CD4-positive, alpha-beta memory T cell (primary cell): ENCODE measurements at regions of chr1 and their contacts with region 1.

Region 1: GRCh38 chr1:44730741-44731512 is at the start of gene RNU5D-1:
- DNase-seq: peak; percentile 90 to 94 (median 91)
- H3K4me3 ChIP-seq: peak within 1 kb of the TSS; percentile 31 to 39
- H3K4me3 Mint-ChIP-seq: peak within 1 kb of the TSS; percentile 54 to 93 (median 84)
- H3K27ac ChIP-seq: peak within 1 kb of the TSS; percentile 96
- H3K27ac Mint-ChIP-seq: peak within 1 kb of the TSS; percentile 97 to 100 (median 99)
- H3K4me1 ChIP-seq: peaks cover 22% of the 10 kb centered on the region
- H3K4me1 Mint-ChIP-seq: peaks cover 18 to 38% (median 24%) of the 10 kb centered on the region in 4 donors
- H3K27me3 ChIP-seq: no peaks in the 10 kb centered on the region
- H3K27me3 Mint-ChIP-seq: no peaks in the 10 kb centered on the region
- total RNA-seq, gene RNU5D-1: not detected

Region 2: GRCh38 chr1:44631647-44632539 is 99.0 kb before region 1 on chr1:
- CTCF ChIA-PET with region 1: no interaction called
- POLR2A ChIA-PET with region 1: interaction called, 12 read pairs
- intact Hi-C with region 1: no loop called
- DNase-seq: peak; percentile 86 to 92 (median 88)
- H3K4me3 ChIP-seq: peak overlapping the region; percentile 38 to 65
- H3K4me3 Mint-ChIP-seq: peak overlapping the region; percentile 91 to 97 (median 93)
- H3K27ac ChIP-seq: peak overlapping the region; percentile 85
- H3K27ac Mint-ChIP-seq: peak overlapping the region; percentile 96 to 99 (median 97)
- H3K4me1 ChIP-seq: peaks cover 35% of the 10 kb centered on the region
- H3K4me1 Mint-ChIP-seq: peaks cover 27 to 50% (median 33%) of the 10 kb centered on the region in 4 donors
- H3K27me3 ChIP-seq: no peaks in the 10 kb centered on the region
- H3K27me3 Mint-ChIP-seq: no peaks in the 10 kb centered on the region

Region 3: DNA sequence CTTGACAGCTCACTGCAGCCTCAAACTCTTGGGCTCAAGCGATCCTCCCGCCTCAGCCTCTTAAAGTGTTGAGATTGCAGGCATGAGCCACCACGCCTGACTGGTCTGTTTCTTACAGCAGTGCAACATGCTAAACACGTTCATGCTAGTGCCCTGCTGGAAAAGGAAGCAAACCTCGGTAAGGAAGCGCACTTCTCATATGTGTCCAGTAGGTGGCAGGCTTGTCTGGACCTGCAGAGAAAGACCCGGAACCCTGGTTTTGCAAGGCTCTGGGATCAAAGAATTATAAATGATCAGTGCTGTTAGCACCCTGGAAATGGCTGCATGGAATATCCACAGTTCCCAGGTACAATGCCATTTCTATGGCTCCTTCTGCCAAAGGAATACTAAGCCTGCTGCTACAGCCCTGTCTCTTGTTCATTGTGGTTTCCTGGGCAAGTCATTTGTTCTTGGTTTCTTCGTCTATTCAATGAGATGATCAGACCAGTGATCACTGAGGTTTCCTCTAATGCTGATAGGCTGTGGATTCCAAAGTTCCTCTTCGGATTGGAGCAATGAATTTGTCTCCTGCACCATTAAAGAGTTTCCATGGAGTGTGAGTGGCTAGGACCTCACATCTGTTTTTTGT is 15.9 kb before region 1 on chr1:
- CTCF ChIA-PET with region 1: interaction called, 175 read pairs
- POLR2A ChIA-PET with region 1: interaction called, 182 read pairs
- intact Hi-C with region 1: loop called (anchors 1 kb)
- DNase-seq: peak; percentile 70 to 75 (median 74)
- H3K4me3 ChIP-seq: no peak overlapping the region
- H3K4me3 Mint-ChIP-seq: peak overlapping the region in 7 of 8 donors; percentile 1 to 84 (median 62)
- H3K27ac ChIP-seq: no peak overlapping the region
- H3K27ac Mint-ChIP-seq: peak overlapping the region; percentile 8 to 88 (median 77)
- H3K4me1 ChIP-seq: peaks cover 26% of the 10 kb centered on the region
- H3K4me1 Mint-ChIP-seq: peaks cover 28 to 47% (median 39%) of the 10 kb centered on the region in 4 donors
- H3K27me3 ChIP-seq: no peaks in the 10 kb centered on the region
- H3K27me3 Mint-ChIP-seq: no peaks in the 10 kb centered on the region

Region 4: GRCh38 chr1:44775078-44775929 is 44.4 kb after region 1 on chr1 and contains the start of gene RPS8:
- CTCF ChIA-PET with region 1: interaction called, 53 read pairs
- POLR2A ChIA-PET with region 1: interaction called, 122 read pairs
- intact Hi-C with region 1: loop called (anchors 1 kb)
- DNase-seq: peak; percentile 89 to 92 (median 91)
- H3K4me3 ChIP-seq: peak within 1 kb of the TSS; percentile 87 to 88
- H3K4me3 Mint-ChIP-seq: peak within 1 kb of the TSS; percentile 89 to 98 (median 94)
- H3K27ac ChIP-seq: peak within 1 kb of the TSS; percentile 78
- H3K27ac Mint-ChIP-seq: peak within 1 kb of the TSS; percentile 82 to 99 (median 98)
- H3K4me1 ChIP-seq: peaks cover 25% of the 10 kb centered on the region
- H3K4me1 Mint-ChIP-seq: peaks cover 20 to 56% (median 27%) of the 10 kb centered on the region in 4 donors
- H3K27me3 ChIP-seq: no peaks in the 10 kb centered on the region
- H3K27me3 Mint-ChIP-seq: no peaks in the 10 kb centered on the region
- total RNA-seq, gene RPS8: 2,728 to 2,811 TPM

Region 5: DNA sequence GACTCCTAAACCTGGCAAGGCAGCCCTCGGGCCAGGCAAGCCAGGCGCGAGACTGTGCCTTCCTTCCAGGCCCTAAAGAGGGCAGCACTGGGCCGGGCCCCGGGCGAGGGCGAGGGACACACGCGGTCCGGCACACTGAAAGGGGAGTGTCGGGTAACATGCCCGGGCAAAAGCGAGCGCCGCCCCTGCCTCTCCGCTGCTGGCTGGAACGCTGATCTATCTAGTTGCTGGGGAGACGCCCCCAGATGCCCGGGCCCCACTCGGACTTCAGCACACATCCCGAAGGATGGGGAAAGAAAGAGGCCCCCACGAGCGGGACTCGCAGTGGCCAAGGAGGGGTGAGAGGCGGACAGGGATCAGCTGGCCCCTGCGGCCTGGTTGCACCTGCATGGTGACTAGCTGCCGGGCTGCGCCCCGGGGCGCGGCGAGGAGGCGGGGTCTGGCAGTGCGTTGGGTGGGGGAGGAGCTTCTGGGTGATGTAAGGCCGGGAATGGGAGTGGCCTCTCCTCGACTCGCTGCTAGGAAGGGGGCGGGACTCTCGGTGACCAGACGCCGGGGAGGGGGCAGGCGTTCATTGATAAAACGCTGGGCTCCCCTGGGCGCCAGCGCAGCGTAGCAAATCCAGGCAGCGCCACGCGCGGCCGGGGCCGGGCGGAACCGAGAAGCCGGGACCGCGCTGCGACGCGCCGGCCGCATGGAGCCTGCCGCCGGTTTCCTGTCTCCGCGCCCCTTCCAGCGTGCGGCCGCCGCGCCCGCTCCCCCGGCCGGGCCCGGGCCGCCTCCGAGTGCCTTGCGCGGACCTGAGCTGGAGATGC is 69.0 kb after region 1 on chr1 and contains the start of gene PLK3:
- CTCF ChIA-PET with region 1: interaction called, 7 read pairs
- POLR2A ChIA-PET with region 1: interaction called, 41 read pairs
- intact Hi-C with region 1: loop called (anchors 5 kb)
- DNase-seq: peak; percentile 99 to 100 (median 99)
- H3K4me3 ChIP-seq: peak within 1 kb of the TSS; percentile 77 to 83
- H3K4me3 Mint-ChIP-seq: peak within 1 kb of the TSS; percentile 89 to 99 (median 96)
- H3K27ac ChIP-seq: peak within 1 kb of the TSS; percentile 96
- H3K27ac Mint-ChIP-seq: peak within 1 kb of the TSS; percentile 82 to 100 (median 99)
- H3K4me1 ChIP-seq: peaks cover 37% of the 10 kb centered on the region
- H3K4me1 Mint-ChIP-seq: peaks cover 23 to 48% (median 31%) of the 10 kb centered on the region in 4 donors
- H3K27me3 ChIP-seq: no peaks in the 10 kb centered on the region
- H3K27me3 Mint-ChIP-seq: no peaks in the 10 kb centered on the region
- total RNA-seq, gene PLK3: 151 to 153 TPM

Region 6: GRCh38 chr1:44812822-44813543 is 82.1 kb after region 1 on chr1:
- CTCF ChIA-PET with region 1: interaction called, 22 read pairs
- POLR2A ChIA-PET with region 1: interaction called, 103 read pairs
- intact Hi-C with region 1: loop called (anchors 5 kb)
- DNase-seq: no peak
- H3K4me3 ChIP-seq: peak overlapping the region in 1 of 2 donors; percentile 54
- H3K4me3 Mint-ChIP-seq: peak overlapping the region; percentile 21 to 93 (median 64)
- H3K27ac ChIP-seq: peak overlapping the region; percentile 64
- H3K27ac Mint-ChIP-seq: peak overlapping the region; percentile 82 to 100 (median 99)
- H3K4me1 ChIP-seq: peaks cover 68% of the 10 kb centered on the region
- H3K4me1 Mint-ChIP-seq: peaks cover 43 to 80% (median 62%) of the 10 kb centered on the region in 4 donors
- H3K27me3 ChIP-seq: no peaks in the 10 kb centered on the region
- H3K27me3 Mint-ChIP-seq: no peaks in the 10 kb centered on the region